Adrenal gland (tissue), 19 donors: ENCODE measurements at regions of chr11 and their contacts with region 1.

Region 1: DNA sequence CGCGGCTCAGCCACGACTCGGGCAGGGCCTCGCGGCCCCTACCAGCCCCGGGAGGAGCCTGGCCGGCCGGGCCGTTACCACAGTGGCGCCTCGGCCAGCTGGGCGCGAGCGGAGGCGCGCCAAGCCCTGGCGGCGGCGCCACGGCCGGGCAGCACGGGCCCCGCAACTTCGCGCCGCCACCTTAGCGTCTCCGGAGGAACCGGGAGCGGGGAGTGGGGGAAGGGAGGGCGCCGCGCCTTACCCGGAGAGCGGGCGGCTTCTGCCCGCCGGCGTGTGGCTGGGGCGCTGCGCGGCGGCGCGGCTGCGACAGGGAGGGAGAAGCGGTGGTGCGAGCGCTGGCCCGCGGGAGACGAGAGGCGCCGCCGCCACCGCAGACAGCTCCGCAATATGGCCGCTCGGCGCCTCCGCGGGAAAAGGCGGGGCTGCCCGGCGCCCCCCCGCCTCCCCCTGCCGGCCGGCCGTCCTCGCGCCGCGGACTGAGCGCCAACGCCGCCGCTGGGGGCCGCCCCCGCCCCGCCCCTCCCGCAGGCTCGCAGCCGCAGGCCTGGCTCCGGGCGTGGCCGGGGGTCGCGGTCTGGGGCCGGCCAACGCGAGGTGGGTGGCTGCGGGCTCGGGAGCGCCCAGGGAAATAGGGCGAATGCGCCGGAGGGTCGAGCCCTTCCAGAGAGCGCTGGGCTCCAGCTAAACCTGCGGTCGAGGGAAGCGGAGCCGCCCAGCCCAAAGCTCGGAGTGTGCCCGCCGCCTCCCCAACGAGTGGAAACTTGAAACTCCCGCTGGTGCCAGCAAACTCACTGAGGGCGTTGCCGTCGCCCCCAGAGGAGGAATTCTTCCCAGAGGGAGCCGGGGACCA is at the start of gene RDX:
- DNase-seq: peak; percentile 82 to 88 (median 84)
- H3K4me3 ChIP-seq: peak within 1 kb of the TSS; percentile 52 to 93 (median 82)
- H3K27ac ChIP-seq: peak within 1 kb of the TSS; percentile 82 to 98 (median 97)
- H3K4me1 ChIP-seq: peaks cover 25 to 43% of the 10 kb centered on the region in 2 donors
- H3K27me3 ChIP-seq: no peaks in the 10 kb centered on the region
- CTCF ChIP-seq: peak in 2 of 6 experiments; percentile 8 to 30
- POLR2A ChIP-seq: peak in 1 of 2 donors; percentile 84
- total RNA-seq, gene RDX: 229 to 1,153 (median 667) TPM

Region 2: DNA sequence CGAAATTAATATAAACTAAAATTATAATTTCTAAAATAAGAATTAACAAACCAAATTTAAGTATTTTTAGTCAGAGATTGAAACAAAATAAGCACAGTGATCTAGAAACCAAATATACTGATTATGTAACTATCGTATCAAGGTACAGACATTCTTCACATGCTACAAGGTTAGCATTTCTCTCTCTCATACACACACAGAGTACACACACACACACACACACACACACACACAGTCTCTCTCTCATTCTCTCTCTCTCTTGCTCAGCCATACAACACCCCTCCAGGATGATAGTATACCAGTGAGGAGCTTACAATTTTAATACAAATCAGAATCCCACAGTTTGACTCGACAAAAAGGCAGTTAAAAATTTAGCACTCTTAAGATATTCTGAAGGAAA is 66.1 kb before region 1 on chr11:
- intact Hi-C with region 1: no loop called
- DNase-seq: no peak
- H3K4me3 ChIP-seq: no peak overlapping the region
- H3K27ac ChIP-seq: no peak overlapping the region
- H3K4me1 ChIP-seq: peaks cover 0 to 14% of the 10 kb centered on the region in 2 donors
- H3K27me3 ChIP-seq: no peaks in the 10 kb centered on the region
- CTCF ChIP-seq: no peak
- POLR2A ChIP-seq: no peak

Region 3: DNA sequence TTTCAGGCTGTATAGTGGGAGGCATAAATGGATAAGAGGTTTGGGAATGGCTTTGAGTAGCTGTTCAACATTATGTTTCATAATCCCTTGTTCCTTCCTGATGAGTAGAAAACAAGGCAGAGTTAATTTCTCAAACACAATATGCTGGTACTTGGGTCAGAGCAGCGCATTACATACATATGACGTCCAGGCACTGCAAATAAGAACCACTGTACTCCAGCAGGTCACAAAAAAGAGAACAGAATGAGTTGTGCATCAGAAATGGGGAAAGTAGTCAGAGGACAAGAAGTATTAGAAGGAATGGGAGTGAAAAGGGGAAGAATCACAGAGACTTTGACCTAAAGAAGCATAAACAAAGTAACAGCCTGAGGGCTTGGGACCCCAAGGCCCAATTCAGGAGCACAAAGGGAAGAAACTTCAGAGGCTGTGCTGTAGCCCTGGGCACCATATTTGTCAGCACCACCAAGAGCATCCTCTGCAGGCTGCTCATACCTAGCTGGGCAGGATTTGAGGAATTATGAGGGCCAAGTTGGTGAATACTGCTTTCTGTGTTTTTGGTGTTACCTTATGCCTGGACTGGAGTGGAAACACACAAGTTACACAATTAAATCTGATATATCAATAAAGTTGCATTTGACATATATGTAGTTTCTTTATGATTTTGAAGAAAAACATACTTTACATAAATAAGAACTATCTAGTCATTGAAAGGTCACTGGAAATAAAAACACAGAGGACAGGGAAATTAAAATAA is 44.2 kb after region 1 on chr11:
- intact Hi-C with region 1: no loop called
- DNase-seq: no peak
- H3K4me3 ChIP-seq: no peak overlapping the region
- H3K27ac ChIP-seq: peak overlapping the region in 1 of 5 donors; percentile 56
- H3K4me1 ChIP-seq: peaks cover 12 to 17% of the 10 kb centered on the region in 2 donors
- H3K27me3 ChIP-seq: no peaks in the 10 kb centered on the region
- CTCF ChIP-seq: no peak
- POLR2A ChIP-seq: no peak

Region 4: DNA sequence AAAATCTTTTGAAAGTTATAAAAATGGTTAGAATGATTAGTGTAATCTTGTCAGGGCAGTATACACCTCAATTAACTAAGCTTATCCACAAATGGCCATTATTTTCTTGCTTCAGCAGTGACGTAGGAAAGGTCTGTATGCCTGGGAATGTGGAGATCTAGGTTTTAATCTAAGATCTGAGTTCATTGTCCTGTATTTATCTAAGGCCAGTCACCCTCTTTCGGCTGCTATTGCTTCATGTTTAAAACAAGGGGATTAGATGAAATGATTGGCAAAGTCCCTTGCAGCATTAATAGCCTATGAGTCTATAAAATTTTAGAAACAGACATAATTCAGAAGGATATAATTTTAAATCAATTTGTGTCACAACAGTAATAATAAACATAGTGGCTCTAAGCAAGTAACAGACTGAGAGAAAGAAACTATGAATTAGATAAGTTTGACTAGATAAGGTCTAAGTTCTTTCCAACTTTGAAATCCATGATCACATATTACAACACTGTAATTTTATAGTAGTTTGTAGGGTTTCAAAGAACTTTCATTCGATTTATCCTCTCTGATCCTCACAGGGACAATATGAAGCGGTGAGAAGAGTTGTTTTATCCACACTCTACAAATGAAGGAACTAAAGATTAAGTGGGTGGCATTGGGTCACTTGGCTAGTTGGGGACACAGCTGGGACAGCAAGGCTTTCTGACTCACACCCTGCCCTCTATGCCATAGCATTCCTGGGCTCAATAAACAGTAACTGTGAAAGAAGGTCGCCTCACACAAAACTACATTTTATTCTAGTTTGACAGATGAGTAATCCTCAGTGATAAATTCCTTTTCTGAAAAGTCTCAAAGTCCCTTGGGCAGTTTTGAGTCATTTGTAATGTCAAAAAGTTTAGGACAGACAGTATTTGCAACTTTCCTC is 60.6 kb after region 1 on chr11:
- intact Hi-C with region 1: loop called (anchors 10 kb)
- DNase-seq: peak; percentile 69 to 90 (median 86)
- H3K4me3 ChIP-seq: peak overlapping the region in 2 of 4 donors; percentile 20 to 27
- H3K27ac ChIP-seq: peak overlapping the region; percentile 76 to 83 (median 80)
- H3K4me1 ChIP-seq: peaks cover 8 to 14% of the 10 kb centered on the region in 2 donors
- H3K27me3 ChIP-seq: no peaks in the 10 kb centered on the region
- CTCF ChIP-seq: no peak
- POLR2A ChIP-seq: peak in 1 of 2 donors; percentile 76

Region 5: GRCh38 chr11:110429731-110430266 is 133.3 kb after region 1 on chr11 and contains the start of gene FDX1:
- intact Hi-C with region 1: loop called in 1 of 2 experiments (anchors 5 kb)
- DNase-seq: peak; percentile 89 to 93 (median 92)
- H3K4me3 ChIP-seq: peak within 1 kb of the TSS; percentile 47 to 100 (median 80)
- H3K27ac ChIP-seq: peak within 1 kb of the TSS; percentile 89 to 98 (median 96)
- H3K4me1 ChIP-seq: peaks cover 17 to 26% of the 10 kb centered on the region in 2 donors
- H3K27me3 ChIP-seq: no peaks in the 10 kb centered on the region
- CTCF ChIP-seq: peak in 3 of 6 experiments; percentile 56 to 85 (median 80)
- POLR2A ChIP-seq: peak; percentile 88 to 90
- total RNA-seq, gene FDX1: 124 to 1,285 (median 324) TPM